Activated CD8-positive, alpha-beta T cell treated with anti-CD3 and anti-CD28 coated beads for 36 hours (primary cell): ENCODE measurements at regions of chr12 and their contacts with region 1.

Region 1: DNA sequence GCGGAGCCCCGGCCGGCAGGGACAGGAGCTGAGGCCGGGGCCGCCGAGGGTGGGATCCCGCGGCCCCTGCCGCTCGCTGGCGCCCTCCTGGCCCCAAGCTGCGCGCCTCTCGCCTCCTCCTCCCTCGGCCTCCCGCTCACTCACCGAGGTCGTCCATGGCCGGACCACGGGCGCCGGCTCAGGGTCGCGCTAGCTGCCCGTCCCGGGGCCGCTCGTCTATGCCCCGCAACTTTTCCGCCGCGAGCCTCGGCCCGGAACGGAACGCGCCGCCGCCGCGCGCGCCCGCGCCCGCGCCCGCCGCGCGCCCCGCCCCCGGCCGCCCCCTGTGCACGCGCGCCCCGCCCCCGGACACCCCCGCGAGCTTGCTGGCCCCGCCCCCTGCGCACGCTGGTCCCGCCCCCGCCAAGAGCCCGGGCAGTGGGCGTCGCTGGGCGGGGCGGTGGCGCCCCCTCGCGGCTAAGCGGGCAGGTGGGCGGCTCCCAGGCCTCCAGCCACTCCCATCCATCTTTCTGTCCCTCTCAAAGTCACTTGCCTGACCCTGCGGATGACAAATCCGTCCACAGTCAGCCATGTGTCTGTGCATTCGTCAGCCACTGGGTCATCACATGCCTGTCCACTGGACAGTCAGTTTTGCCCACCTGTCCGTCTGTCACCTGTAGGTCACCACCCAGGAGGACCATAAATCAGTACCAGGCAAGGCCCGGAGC is at the start of gene PXN:
- DNase-seq: peak; percentile 88
- ATAC-seq: peak; percentile 82
- H3K4me3 Mint-ChIP-seq: peak within 1 kb of the TSS; percentile 78
- H3K27ac Mint-ChIP-seq: peak within 1 kb of the TSS; percentile 79
- H3K4me1 Mint-ChIP-seq: peaks cover 45% of the 10 kb centered on the region
- H3K27me3 Mint-ChIP-seq: no peaks in the 10 kb centered on the region
- CTCF ChIP-seq: peak; percentile 71
- total RNA-seq, gene PXN: 40.2 to 45.3 TPM

Region 2: GRCh38 chr12:120100435-120101029 is 165.1 kb before region 1 on chr12:
- CTCF ChIA-PET with region 1: no interaction called
- POLR2A ChIA-PET with region 1: no interaction called
- intact Hi-C with region 1: no loop called
- DNase-seq: no peak
- ATAC-seq: no peak
- H3K4me3 Mint-ChIP-seq: no peak overlapping the region
- H3K27ac Mint-ChIP-seq: no peak overlapping the region
- H3K4me1 Mint-ChIP-seq: peaks cover 15% of the 10 kb centered on the region
- H3K27me3 Mint-ChIP-seq: no peaks in the 10 kb centered on the region
- CTCF ChIP-seq: no peak

Region 3: GRCh38 chr12:120200364-120200800 is 65.2 kb before region 1 on chr12:
- CTCF ChIA-PET with region 1: interaction called, 37 read pairs
- POLR2A ChIA-PET with region 1: interaction called, 107 read pairs
- intact Hi-C with region 1: no loop called
- DNase-seq: no peak
- ATAC-seq: no peak
- H3K4me3 Mint-ChIP-seq: peak overlapping the region; percentile 97
- H3K27ac Mint-ChIP-seq: peak overlapping the region; percentile 95
- H3K4me1 Mint-ChIP-seq: peaks cover 37% of the 10 kb centered on the region
- H3K27me3 Mint-ChIP-seq: no peaks in the 10 kb centered on the region
- CTCF ChIP-seq: no peak

Region 4: DNA sequence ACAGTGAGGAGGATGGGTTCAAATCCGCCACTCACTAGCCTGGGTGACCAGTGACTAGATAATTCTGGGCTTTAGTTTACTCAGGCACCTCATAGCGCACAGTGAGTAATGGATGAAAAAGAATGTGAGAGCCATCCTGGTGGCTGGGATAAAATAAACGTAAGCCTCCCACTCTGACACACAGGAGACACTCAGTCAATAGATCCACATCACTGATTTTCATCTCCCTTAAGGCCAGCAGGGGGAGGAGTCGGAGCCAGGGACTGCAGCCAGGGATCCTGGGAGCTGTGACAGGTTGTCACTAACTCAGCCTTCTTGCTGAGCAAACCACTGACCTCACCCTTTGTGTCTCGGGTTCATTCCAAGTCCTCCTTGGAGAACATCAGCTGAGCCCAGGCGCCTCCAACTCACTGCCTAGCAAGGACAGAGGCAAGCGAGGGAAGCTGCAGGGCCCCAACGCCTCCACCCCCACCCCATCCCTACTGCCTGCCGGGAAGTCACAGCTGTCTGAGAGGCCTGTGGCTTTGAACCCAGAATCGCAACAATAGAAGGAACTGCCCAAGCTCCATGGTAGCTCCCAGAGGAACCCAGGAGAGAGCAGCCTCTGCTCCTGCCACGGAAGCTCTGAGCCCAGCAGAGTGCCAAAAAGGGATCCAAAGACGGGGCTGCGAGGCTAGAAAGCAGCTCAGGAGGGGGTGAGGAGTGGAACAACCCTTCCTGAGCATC is 30.8 kb before region 1 on chr12:
- CTCF ChIA-PET with region 1: interaction called, 749 read pairs
- POLR2A ChIA-PET with region 1: interaction called, 179 read pairs
- intact Hi-C with region 1: no loop called
- DNase-seq: no peak
- ATAC-seq: no peak
- H3K4me3 Mint-ChIP-seq: no peak overlapping the region
- H3K27ac Mint-ChIP-seq: peak overlapping the region; percentile 13
- H3K4me1 Mint-ChIP-seq: peaks cover 70% of the 10 kb centered on the region
- H3K27me3 Mint-ChIP-seq: no peaks in the 10 kb centered on the region
- CTCF ChIP-seq: no peak

Region 5: DNA sequence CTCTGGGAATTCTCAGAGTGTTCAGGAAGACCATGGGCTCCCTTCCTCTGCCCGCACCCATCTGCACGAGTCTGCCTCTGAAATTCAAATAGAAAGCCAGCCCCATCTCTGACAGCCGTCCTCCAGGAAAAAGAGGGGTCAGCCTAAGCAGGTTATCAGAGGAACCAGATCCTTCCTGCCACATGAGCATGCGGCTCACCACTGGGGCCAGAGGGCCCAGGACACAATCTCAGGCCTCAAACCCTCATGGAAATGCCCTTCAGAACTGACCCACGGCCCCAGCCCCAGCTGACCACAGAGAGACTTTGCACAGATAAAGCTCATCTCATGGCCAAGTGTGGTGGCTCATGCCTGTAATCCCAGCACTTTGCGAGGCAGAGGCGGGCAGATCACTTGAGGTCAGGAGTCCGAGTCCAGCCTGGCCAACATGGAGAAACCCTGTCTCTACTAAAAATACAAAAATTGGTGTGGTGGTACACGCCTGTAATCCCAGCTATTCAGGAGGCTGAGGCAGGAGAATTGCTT is 23.3 kb before region 1 on chr12:
- CTCF ChIA-PET with region 1: interaction called, 22 read pairs
- POLR2A ChIA-PET with region 1: interaction called, 5 read pairs
- intact Hi-C with region 1: no loop called
- DNase-seq: no peak
- ATAC-seq: no peak
- H3K4me3 Mint-ChIP-seq: no peak overlapping the region
- H3K27ac Mint-ChIP-seq: no peak overlapping the region
- H3K4me1 Mint-ChIP-seq: peaks cover 57% of the 10 kb centered on the region
- H3K27me3 Mint-ChIP-seq: no peaks in the 10 kb centered on the region
- CTCF ChIP-seq: no peak

Region 6: GRCh38 chr12:120249875-120250795 is 15.5 kb before region 1 on chr12:
- CTCF ChIA-PET with region 1: interaction called, 53 read pairs
- POLR2A ChIA-PET with region 1: interaction called, 44 read pairs
- intact Hi-C with region 1: no loop called
- DNase-seq: peak; percentile 75
- ATAC-seq: peak; percentile 8
- H3K4me3 Mint-ChIP-seq: peak overlapping the region; percentile 6
- H3K27ac Mint-ChIP-seq: peak overlapping the region; percentile 34
- H3K4me1 Mint-ChIP-seq: peaks cover 75% of the 10 kb centered on the region
- H3K27me3 Mint-ChIP-seq: no peaks in the 10 kb centered on the region
- CTCF ChIP-seq: no peak